ENCODE measurements at regions of chr4 and their contacts with region 1.

Region 1: GRCh38 chr4:122666527-122667245 is 45.8 kb upstream of the IL21 start:
- DNase-seq: no peak
- H3K4me3 Mint-ChIP-seq: peak overlapping the region; percentile 14
- H3K27ac Mint-ChIP-seq: peak overlapping the region; percentile 93
- H3K4me1 Mint-ChIP-seq: peaks cover 74% of the 10 kb centered on the region
- H3K27me3 Mint-ChIP-seq: no peaks in the 10 kb centered on the region

Region 2: GRCh38 chr4:122045533-122045932 is 621.2 kb before region 1 on chr4:
- CTCF ChIA-PET with region 1: no interaction called
- POLR2A ChIA-PET with region 1: no interaction called
- intact Hi-C with region 1: no loop called
- DNase-seq: no peak
- H3K4me3 Mint-ChIP-seq: no peak overlapping the region
- H3K27ac Mint-ChIP-seq: no peak overlapping the region
- H3K4me1 Mint-ChIP-seq: no peaks in the 10 kb centered on the region
- H3K27me3 Mint-ChIP-seq: peaks cover 3% of the 10 kb centered on the region

Region 3: GRCh38 chr4:122508083-122508482 is 158.6 kb before region 1 on chr4:
- CTCF ChIA-PET with region 1: no interaction called
- POLR2A ChIA-PET with region 1: no interaction called
- intact Hi-C with region 1: loop called (anchors 5 kb)
- DNase-seq: no peak
- H3K4me3 Mint-ChIP-seq: peak overlapping the region; percentile 59
- H3K27ac Mint-ChIP-seq: peak overlapping the region; percentile 87
- H3K4me1 Mint-ChIP-seq: peaks cover 73% of the 10 kb centered on the region
- H3K27me3 Mint-ChIP-seq: no peaks in the 10 kb centered on the region

Region 4: DNA sequence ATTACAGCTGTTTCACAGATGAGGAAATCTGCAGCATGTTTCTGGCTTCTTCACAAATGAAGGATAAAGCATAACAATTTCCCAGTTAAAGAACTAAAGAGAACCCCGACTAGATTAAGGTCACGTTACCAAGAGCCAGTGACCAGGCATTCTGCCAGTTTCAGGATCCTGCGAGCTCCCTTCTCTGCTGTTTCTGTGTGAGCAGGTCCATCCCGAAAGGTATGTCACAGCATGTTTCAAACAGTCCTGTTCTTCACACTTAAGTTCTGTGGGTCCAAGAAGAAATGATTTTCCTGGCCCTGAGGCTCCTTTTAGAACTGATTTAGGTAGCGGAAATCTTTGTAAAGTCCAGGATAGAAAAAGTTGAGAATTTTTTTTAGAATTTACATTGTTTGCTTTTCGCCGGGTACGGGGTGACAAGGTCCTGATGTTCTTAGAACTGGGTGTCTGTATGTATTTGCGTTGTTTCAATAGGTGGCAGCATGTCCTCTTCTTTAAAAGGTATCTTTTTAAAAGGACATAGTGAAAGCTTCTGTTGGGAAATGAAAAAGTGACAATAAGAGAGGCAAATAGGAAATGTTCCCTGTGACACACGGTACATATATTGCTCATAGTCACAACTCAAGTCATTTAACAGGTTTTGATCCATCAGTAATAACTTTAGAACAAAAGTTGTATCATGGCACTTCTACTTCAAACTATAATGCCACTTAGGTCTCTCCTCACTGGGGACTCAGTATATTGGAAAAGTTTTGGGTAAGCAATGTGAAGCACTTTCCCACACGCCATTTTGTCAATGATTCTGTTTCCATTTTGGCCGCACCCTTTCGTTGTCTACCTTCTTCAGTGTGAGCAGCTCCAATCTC is 64.2 kb before region 1 on chr4:
- CTCF ChIA-PET with region 1: interaction called, 3 read pairs
- POLR2A ChIA-PET with region 1: no interaction called
- intact Hi-C with region 1: loop called (anchors 1 kb)
- DNase-seq: no peak
- H3K4me3 Mint-ChIP-seq: peak overlapping the region; percentile 11
- H3K27ac Mint-ChIP-seq: peak overlapping the region; percentile 38
- H3K4me1 Mint-ChIP-seq: peaks cover 25% of the 10 kb centered on the region
- H3K27me3 Mint-ChIP-seq: peaks cover 7% of the 10 kb centered on the region

Region 5: DNA sequence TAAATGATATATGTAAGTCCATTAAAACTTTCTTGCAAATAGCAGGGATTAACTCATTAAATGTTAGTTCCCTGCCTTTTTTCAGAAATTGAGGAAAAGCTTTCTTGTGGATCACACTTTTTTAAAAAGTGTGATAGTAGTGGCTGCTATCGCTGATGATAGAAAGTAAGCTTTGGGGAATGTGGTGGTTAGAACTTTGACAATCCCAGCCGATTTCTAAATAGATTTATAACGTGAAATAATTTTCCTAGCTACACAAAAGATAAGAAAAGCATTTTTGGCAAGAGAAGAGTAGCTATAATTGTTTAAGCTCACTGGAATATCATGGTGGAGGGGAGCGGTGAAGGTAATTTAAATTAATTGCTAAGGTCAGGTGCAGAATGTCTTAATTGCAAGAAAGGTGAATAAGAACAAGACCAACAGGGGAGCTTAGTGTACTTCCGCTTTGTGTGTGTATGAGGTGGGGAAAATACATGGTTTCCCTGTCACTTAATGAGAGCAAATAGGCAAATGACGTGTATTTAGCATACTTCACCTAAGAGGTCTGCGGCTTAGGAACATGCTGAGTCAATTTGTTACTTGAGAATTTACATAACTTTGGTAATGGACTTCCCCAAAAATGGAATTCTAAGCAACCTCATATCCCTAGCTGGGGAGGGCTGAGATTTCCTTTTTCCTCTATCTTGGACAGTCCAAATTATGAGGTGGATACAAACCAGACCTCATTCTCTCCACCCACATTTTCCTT is 34.1 kb before region 1 on chr4:
- CTCF ChIA-PET with region 1: interaction called, 4 read pairs
- POLR2A ChIA-PET with region 1: interaction called, 4 read pairs
- intact Hi-C with region 1: loop called (anchors 2 kb)
- DNase-seq: no peak
- H3K4me3 Mint-ChIP-seq: peak overlapping the region; percentile 21
- H3K27ac Mint-ChIP-seq: peak overlapping the region; percentile 55
- H3K4me1 Mint-ChIP-seq: peaks cover 62% of the 10 kb centered on the region
- H3K27me3 Mint-ChIP-seq: no peaks in the 10 kb centered on the region

Region 6: DNA sequence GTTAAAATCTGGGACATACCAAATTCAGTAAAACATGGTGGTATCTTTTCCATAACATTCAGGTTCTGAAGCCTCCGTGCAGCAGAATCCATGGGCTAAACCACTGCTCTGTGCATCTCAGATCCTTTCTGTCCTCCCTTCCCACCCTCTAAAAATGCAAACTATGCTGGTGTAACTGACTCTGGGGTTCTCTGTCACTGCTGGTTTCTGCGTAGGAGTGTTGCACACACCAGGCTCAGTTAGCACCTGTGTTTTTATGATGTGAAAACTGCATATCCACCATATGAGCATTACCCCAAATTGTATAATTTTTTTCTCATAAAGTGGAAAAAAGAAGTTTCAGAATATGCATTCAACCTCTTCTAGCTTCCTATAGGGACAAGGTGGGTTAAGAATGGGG is 23.4 kb before region 1 on chr4:
- CTCF ChIA-PET with region 1: no interaction called
- POLR2A ChIA-PET with region 1: no interaction called
- intact Hi-C with region 1: no loop called
- DNase-seq: no peak
- H3K4me3 Mint-ChIP-seq: no peak overlapping the region
- H3K27ac Mint-ChIP-seq: no peak overlapping the region
- H3K4me1 Mint-ChIP-seq: no peaks in the 10 kb centered on the region
- H3K27me3 Mint-ChIP-seq: no peaks in the 10 kb centered on the region

Region 7: DNA sequence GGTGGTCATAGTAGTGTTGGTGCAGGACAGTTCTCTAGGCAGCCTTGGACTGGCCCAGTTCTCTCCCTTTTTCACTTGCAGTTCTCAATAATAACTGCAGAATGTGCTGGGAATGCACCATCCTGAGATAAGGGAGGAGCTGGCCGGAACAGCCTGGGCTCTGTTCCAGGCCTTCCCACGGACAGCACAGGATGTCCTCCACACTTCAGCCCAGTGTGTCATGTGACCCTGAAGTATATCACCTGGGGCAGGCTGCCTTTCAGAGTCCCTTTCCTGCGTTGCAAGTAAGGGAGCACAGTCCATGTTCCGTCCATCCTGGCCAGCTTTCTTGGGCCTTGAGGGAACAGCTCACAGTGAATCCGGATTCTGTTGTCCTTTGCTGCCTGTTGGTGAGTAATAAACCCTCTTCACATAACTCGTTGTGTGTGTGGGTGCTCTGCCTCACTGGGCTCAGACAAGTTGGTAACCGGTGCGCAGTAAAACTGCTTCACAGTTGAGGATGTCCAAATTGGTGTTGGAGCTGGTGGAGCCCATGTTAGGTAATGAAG is 33.6 kb after region 1 on chr4:
- CTCF ChIA-PET with region 1: interaction called, 3 read pairs
- POLR2A ChIA-PET with region 1: interaction called, 6 read pairs
- intact Hi-C with region 1: loop called (anchors 1 kb)
- DNase-seq: peak; percentile 15
- H3K4me3 Mint-ChIP-seq: peak overlapping the region; percentile 64
- H3K27ac Mint-ChIP-seq: peak overlapping the region; percentile 92
- H3K4me1 Mint-ChIP-seq: peaks cover 48% of the 10 kb centered on the region
- H3K27me3 Mint-ChIP-seq: peaks cover 5% of the 10 kb centered on the region

Measured in activated CD4-positive, alpha-beta memory T cell treated with anti-CD3 and anti-CD28 coated beads for 36 hours (primary cell).